GM12878 (cell line): ENCODE measurements at regions of chr12 and their contacts with region 1.

Region 1: GRCh38 chr12:101830367-101831325 is at the start of gene GNPTAB:
- DNase-seq: peak; percentile 80
- ATAC-seq: peak; percentile 89
- H3K4me3 ChIP-seq: peak within 1 kb of the TSS; percentile 94
- H3K27ac ChIP-seq: peak within 1 kb of the TSS; percentile 81
- H3K4me1 ChIP-seq: peaks cover 7% of the 10 kb centered on the region
- H3K27me3 ChIP-seq: no peaks in the 10 kb centered on the region
- CTCF ChIP-seq: peak; percentile 75 to 82 (median 77)
- EP300 ChIP-seq: 0 out of 4 replicates have a peak, but pooled peaks of 1 of the 2 experiments have one; percentile 22
- POLR2A ChIP-seq: peak; percentile 84
- RAD21 ChIP-seq: no peak
- polyA plus RNA-seq, gene GNPTAB: 9.8 to 10.5 TPM

Region 2: GRCh38 chr12:101407436-101408345 is 423.0 kb before region 1 on chr12 and contains the start of gene ARL1:
- CTCF ChIA-PET with region 1: interaction called, 5 read pairs
- POLR2A ChIA-PET with region 1: interaction called, 3 read pairs
- RAD21 ChIA-PET with region 1: interaction called, 4 read pairs
- SMC1A ChIA-PET with region 1: interaction called, 10 read pairs
- in situ Hi-C with region 1: no loop called
- intact Hi-C with region 1: no loop called
- DNase-seq: peak; percentile 63
- ATAC-seq: peak; percentile 89
- H3K4me3 ChIP-seq: peak within 1 kb of the TSS; percentile 93
- H3K27ac ChIP-seq: peak within 1 kb of the TSS; percentile 100
- H3K4me1 ChIP-seq: no peaks in the 10 kb centered on the region; the same call in 1 of the 2 replicates
- H3K27me3 ChIP-seq: no peaks in the 10 kb centered on the region
- CTCF ChIP-seq: no peak
- EP300 ChIP-seq: peak in 1 of 2 experiments; percentile 99; a peak in 2 of 4 replicates
- POLR2A ChIP-seq: peak; percentile 90
- RAD21 ChIP-seq: no peak
- polyA plus RNA-seq, gene ARL1: 84.5 to 95.0 TPM

Region 3: DNA sequence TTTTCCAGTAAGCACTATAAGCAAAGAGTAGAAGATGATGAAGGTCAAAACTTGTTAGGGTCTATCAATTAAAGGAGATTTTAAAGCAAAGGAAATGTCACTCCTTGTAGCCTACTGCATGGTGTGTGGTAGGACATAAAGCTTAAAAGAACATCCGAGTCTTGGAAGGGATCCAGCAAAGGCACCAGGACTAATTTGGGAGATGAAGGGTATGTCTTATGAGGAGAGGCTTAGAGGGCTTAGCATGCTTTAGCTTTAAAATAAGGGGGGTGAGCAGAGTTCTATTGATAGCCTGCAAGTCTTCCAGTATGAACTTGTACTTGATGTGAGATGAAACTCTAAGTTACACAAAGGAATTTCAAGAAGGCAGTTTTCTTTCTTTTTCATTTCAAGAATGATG is 247.7 kb before region 1 on chr12:
- CTCF ChIA-PET with region 1: no interaction called
- POLR2A ChIA-PET with region 1: no interaction called
- RAD21 ChIA-PET with region 1: no interaction called
- SMC1A ChIA-PET with region 1: no interaction called
- in situ Hi-C with region 1: no loop called
- intact Hi-C with region 1: no loop called
- DNase-seq: no peak
- ATAC-seq: no peak
- H3K4me3 ChIP-seq: no peak overlapping the region
- H3K27ac ChIP-seq: no peak overlapping the region
- H3K4me1 ChIP-seq: no peaks in the 10 kb centered on the region
- H3K27me3 ChIP-seq: peaks cover 0 to 2% of the 10 kb centered on the region in 2 experiments; a peak in 1 of 4 replicates
- CTCF ChIP-seq: no peak
- EP300 ChIP-seq: no peak
- POLR2A ChIP-seq: no peak
- RAD21 ChIP-seq: no peak

Region 4: DNA sequence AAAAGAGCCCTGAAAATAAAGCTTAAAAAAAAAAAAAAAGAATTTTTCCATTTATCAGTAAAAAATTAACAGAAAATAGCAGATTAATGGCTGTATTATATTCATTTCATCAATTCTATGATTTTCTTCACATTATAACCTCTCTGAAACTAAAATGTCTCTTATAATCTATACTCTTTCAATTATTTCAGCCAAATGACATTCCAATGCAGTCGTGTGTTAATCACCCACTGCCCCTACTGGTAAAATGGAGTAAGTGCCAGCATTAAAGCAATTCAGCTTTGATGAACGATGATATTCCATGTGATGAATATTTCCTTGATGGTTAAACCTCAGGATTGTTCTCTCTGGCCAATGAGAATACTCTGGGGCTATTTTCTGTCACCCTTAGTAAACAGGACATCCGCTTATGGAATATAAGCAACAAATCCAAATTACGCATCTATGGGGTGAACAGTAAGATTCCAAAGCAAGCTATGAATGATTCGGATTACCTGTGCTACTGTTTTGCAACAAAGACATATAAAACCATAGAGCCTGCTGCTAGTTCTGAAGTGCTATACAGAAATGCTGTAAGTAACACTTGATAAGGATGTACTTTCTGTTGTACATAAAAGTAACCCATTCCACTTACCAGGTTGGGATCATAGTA is 71.1 kb before region 1 on chr12:
- CTCF ChIA-PET with region 1: interaction called, 10 read pairs
- POLR2A ChIA-PET with region 1: no interaction called
- RAD21 ChIA-PET with region 1: interaction called, 5 read pairs
- SMC1A ChIA-PET with region 1: interaction called, 3 read pairs
- in situ Hi-C with region 1: no loop called
- intact Hi-C with region 1: no loop called
- DNase-seq: no peak
- ATAC-seq: peak; percentile 80
- H3K4me3 ChIP-seq: no peak overlapping the region
- H3K27ac ChIP-seq: no peak overlapping the region
- H3K4me1 ChIP-seq: no peaks in the 10 kb centered on the region
- H3K27me3 ChIP-seq: no peaks in the 10 kb centered on the region
- CTCF ChIP-seq: peak; percentile 68 to 83 (median 76)
- EP300 ChIP-seq: no peak
- POLR2A ChIP-seq: no peak
- RAD21 ChIP-seq: peak; percentile 87

Region 5: GRCh38 chr12:101792051-101792931 is 38.4 kb before region 1 on chr12:
- CTCF ChIA-PET with region 1: interaction called, 84 read pairs
- POLR2A ChIA-PET with region 1: no interaction called
- RAD21 ChIA-PET with region 1: interaction called, 33 read pairs
- SMC1A ChIA-PET with region 1: interaction called, 44 read pairs
- in situ Hi-C with region 1: no loop called
- intact Hi-C with region 1: loop called (anchors 5 kb)
- DNase-seq: no peak
- ATAC-seq: peak; percentile 38; the same call in 1 of the 3 replicates
- H3K4me3 ChIP-seq: no peak overlapping the region
- H3K27ac ChIP-seq: no peak overlapping the region
- H3K4me1 ChIP-seq: peaks cover 10% of the 10 kb centered on the region
- H3K27me3 ChIP-seq: no peaks in the 10 kb centered on the region
- CTCF ChIP-seq: peak; percentile 15 to 36 (median 19); a peak in 4 of 6 replicates
- EP300 ChIP-seq: no peak
- POLR2A ChIP-seq: no peak
- RAD21 ChIP-seq: peak; percentile 17; the same call in 1 of the 2 replicates

Region 6: DNA sequence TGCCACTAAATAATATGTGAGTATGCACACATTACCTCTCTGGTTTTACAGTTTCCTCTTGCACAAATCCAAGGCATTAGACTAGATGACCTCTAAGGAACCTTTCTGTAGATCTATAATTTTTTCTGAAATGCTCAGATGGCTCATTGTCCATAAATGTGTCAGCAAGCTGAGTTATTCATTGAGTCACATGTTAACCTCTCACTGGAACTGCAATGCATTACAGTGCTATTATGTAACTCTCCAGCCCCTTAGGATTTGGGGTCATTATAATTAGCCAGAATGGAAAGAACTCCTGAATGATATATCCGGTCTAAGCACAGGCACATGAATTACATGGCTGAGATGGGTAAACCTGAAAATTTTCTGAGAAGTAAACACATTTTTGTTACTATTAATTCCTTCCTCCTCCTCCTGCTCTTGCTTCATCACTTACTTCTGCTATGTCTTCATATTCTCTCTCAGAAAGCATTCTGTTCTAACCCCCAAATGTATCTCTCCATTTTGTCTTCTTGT is 26.5 kb after region 1 on chr12:
- CTCF ChIA-PET with region 1: interaction called, 4 read pairs
- POLR2A ChIA-PET with region 1: interaction called, 3 read pairs
- RAD21 ChIA-PET with region 1: interaction called, 16 read pairs
- SMC1A ChIA-PET with region 1: interaction called, 18 read pairs
- in situ Hi-C with region 1: no loop called
- intact Hi-C with region 1: no loop called
- DNase-seq: no peak
- ATAC-seq: peak; percentile 49
- H3K4me3 ChIP-seq: no peak overlapping the region
- H3K27ac ChIP-seq: peak overlapping the region; percentile 75
- H3K4me1 ChIP-seq: peaks cover 64% of the 10 kb centered on the region
- H3K27me3 ChIP-seq: no peaks in the 10 kb centered on the region
- CTCF ChIP-seq: no peak
- EP300 ChIP-seq: peak; percentile 40 to 64; a peak in 3 of 4 replicates
- POLR2A ChIP-seq: no peak
- RAD21 ChIP-seq: no peak

Region 7: GRCh38 chr12:101891462-101892273 is 61.0 kb after region 1 on chr12:
- CTCF ChIA-PET with region 1: interaction called, 19 read pairs
- POLR2A ChIA-PET with region 1: interaction called, 3 read pairs
- RAD21 ChIA-PET with region 1: interaction called, 12 read pairs
- SMC1A ChIA-PET with region 1: interaction called, 7 read pairs
- in situ Hi-C with region 1: no loop called
- intact Hi-C with region 1: no loop called
- DNase-seq: peak; percentile 75
- ATAC-seq: peak; percentile 92
- H3K4me3 ChIP-seq: 0 out of 2 replicates have a peak overlapping the region, but pooled peaks have one; percentile 25
- H3K27ac ChIP-seq: peak overlapping the region; percentile 41
- H3K4me1 ChIP-seq: peaks cover 11% of the 10 kb centered on the region
- H3K27me3 ChIP-seq: no peaks in the 10 kb centered on the region
- CTCF ChIP-seq: no peak
- EP300 ChIP-seq: no peak
- POLR2A ChIP-seq: peak; percentile 40; the same call in 1 of the 2 replicates
- RAD21 ChIP-seq: no peak